CD8-positive, alpha-beta memory T cell (primary cell): ENCODE measurements at regions of chr14 and their contacts with region 1.

Region 1: GRCh38 chr14:50823051-50823761 is 7.8 kb downstream of the NIN start:
- DNase-seq: peak in 1 of 5 donors; percentile 29
- H3K4me3 ChIP-seq: peak overlapping the region; percentile 26
- H3K4me3 Mint-ChIP-seq: peak overlapping the region; percentile 44 to 87 (median 78)
- H3K27ac ChIP-seq: peak overlapping the region; percentile 43
- H3K27ac Mint-ChIP-seq: peak overlapping the region; percentile 87 to 98 (median 95)
- H3K4me1 ChIP-seq: peaks cover 96% of the 10 kb centered on the region
- H3K4me1 Mint-ChIP-seq: peaks cover 86 to 96% (median 96%) of the 10 kb centered on the region in 3 donors
- H3K27me3 ChIP-seq: no peaks in the 10 kb centered on the region
- H3K27me3 Mint-ChIP-seq: no peaks in the 10 kb centered on the region

Region 2: GRCh38 chr14:50778721-50779483 is 44.3 kb before region 1 on chr14:
- CTCF ChIA-PET with region 1: interaction called, 34 read pairs
- POLR2A ChIA-PET with region 1: interaction called, 11 read pairs
- DNase-seq: no peak
- H3K4me3 ChIP-seq: no peak overlapping the region
- H3K4me3 Mint-ChIP-seq: peak overlapping the region in 6 of 7 donors; percentile 2 to 49 (median 33)
- H3K27ac ChIP-seq: no peak overlapping the region
- H3K27ac Mint-ChIP-seq: peak overlapping the region; percentile 27 to 95 (median 82)
- H3K4me1 ChIP-seq: peaks cover 39% of the 10 kb centered on the region
- H3K4me1 Mint-ChIP-seq: peaks cover 54 to 84% (median 68%) of the 10 kb centered on the region in 3 donors
- H3K27me3 ChIP-seq: no peaks in the 10 kb centered on the region
- H3K27me3 Mint-ChIP-seq: no peaks in the 10 kb centered on the region

Region 3: GRCh38 chr14:50791201-50791600 is 32.0 kb before region 1 on chr14:
- CTCF ChIA-PET with region 1: interaction called, 34 read pairs
- POLR2A ChIA-PET with region 1: interaction called, 13 read pairs
- DNase-seq: no peak
- H3K4me3 ChIP-seq: no peak overlapping the region
- H3K4me3 Mint-ChIP-seq: peak overlapping the region in 6 of 7 donors; percentile 53 to 88 (median 72)
- H3K27ac ChIP-seq: no peak overlapping the region
- H3K27ac Mint-ChIP-seq: peak overlapping the region; percentile 20 to 95 (median 88)
- H3K4me1 ChIP-seq: peaks cover 68% of the 10 kb centered on the region
- H3K4me1 Mint-ChIP-seq: peaks cover 87 to 100% (median 93%) of the 10 kb centered on the region in 3 donors
- H3K27me3 ChIP-seq: no peaks in the 10 kb centered on the region
- H3K27me3 Mint-ChIP-seq: no peaks in the 10 kb centered on the region

Region 4: GRCh38 chr14:50920482-50921230 is 97.5 kb after region 1 on chr14:
- CTCF ChIA-PET with region 1: no interaction called
- POLR2A ChIA-PET with region 1: no interaction called
- DNase-seq: no peak
- H3K4me3 ChIP-seq: no peak overlapping the region
- H3K4me3 Mint-ChIP-seq: no peak overlapping the region
- H3K27ac ChIP-seq: no peak overlapping the region
- H3K27ac Mint-ChIP-seq: no peak overlapping the region
- H3K4me1 ChIP-seq: no peaks in the 10 kb centered on the region
- H3K4me1 Mint-ChIP-seq: no peaks in the 10 kb centered on the region
- H3K27me3 ChIP-seq: no peaks in the 10 kb centered on the region
- H3K27me3 Mint-ChIP-seq: peaks cover 3 to 49% of the 10 kb centered on the region in 2 donors